A673 (cell line): ENCODE measurements at regions of chr5 and their contacts with region 1.

Region 1: DNA sequence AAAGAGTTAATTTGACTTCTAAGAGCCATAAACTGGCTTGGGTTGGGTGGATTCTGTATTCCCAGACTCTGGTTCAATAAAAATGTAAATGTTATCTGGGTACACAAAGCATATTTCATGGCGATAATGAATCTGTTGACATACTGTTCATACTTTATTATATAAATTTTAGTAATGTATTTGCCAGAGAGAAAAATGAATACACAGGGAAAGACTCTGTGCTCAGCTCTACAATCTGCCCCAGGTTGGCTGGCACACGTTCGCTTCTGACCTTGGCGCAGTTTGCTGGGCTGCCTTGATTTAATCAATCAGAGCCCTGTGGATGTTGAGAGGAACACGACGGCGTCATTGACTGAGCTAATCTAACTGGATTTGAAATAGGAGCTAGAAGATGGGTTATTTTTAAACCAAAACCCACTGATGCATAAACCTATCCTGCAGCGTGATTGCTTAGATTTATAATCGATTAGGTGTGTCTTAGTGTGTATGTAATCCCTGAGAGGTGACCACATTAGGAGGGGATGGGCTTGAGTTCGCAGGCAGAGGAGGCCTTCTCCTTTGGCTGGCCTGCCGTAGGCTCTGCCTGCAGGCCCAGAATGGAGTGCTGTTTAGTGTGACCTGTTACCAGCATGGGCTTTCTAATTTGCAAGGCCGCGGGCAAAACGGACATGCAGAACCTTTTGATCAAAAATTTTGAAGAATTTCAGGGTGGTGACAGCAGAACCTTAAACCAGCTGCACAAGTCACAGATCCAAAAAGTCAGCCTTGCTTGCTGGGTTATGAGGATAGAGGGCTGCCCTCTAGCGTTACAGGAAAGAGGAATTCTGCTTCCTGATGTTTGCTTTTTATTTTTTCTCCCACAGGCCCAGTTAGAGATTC is 3.9 kb upstream of the ADCY2 start:
- DNase-seq: peak; percentile 60
- H3K4me3 ChIP-seq: no peak overlapping the region
- H3K27ac ChIP-seq: no peak overlapping the region
- H3K4me1 ChIP-seq: no peaks in the 10 kb centered on the region
- H3K27me3 ChIP-seq: peaks cover 17% of the 10 kb centered on the region
- CTCF ChIP-seq: peak; percentile 74

Region 2: GRCh38 chr5:6765612-6766525 is 626.2 kb before region 1 on chr5:
- CTCF ChIA-PET with region 1: no interaction called
- POLR2A ChIA-PET with region 1: no interaction called
- intact Hi-C with region 1: loop called (anchors 10 kb)
- DNase-seq: peak; percentile 82
- H3K4me3 ChIP-seq: no peak overlapping the region
- H3K27ac ChIP-seq: no peak overlapping the region
- H3K4me1 ChIP-seq: peaks cover 7% of the 10 kb centered on the region
- H3K27me3 ChIP-seq: no peaks in the 10 kb centered on the region
- CTCF ChIP-seq: peak; percentile 90

Region 3: GRCh38 chr5:7124959-7125358 is 267.1 kb before region 1 on chr5:
- CTCF ChIA-PET with region 1: no interaction called
- POLR2A ChIA-PET with region 1: no interaction called
- intact Hi-C with region 1: no loop called
- DNase-seq: no peak
- H3K4me3 ChIP-seq: no peak overlapping the region
- H3K27ac ChIP-seq: no peak overlapping the region
- H3K4me1 ChIP-seq: no peaks in the 10 kb centered on the region
- H3K27me3 ChIP-seq: no peaks in the 10 kb centered on the region
- CTCF ChIP-seq: no peak

Region 4: DNA sequence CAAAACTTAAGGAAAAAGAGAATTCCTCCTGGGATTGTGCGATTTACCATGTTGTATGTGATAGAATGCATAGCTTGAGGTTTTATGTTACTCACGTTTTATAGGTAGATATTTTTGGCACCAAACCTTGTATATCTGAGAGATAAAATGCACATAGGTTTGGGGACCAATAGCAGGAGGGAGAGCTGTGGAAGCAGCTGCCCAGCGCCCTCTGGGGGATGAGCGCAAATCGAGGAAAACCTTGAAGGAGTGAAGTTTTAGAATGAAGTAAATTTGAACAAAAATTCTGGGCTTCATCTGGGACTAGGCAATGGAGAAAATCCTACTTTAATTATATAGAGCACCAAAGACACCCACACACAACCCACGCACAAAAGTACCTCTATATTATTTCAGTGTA is 200.9 kb after region 1 on chr5:
- CTCF ChIA-PET with region 1: no interaction called
- POLR2A ChIA-PET with region 1: no interaction called
- intact Hi-C with region 1: loop called (anchors 2 kb)
- DNase-seq: peak; percentile 23
- H3K4me3 ChIP-seq: no peak overlapping the region
- H3K27ac ChIP-seq: no peak overlapping the region
- H3K4me1 ChIP-seq: no peaks in the 10 kb centered on the region
- H3K27me3 ChIP-seq: no peaks in the 10 kb centered on the region
- CTCF ChIP-seq: peak; percentile 63

Region 5: GRCh38 chr5:7745882-7746610 is 354.0 kb after region 1 on chr5:
- CTCF ChIA-PET with region 1: no interaction called
- POLR2A ChIA-PET with region 1: no interaction called
- intact Hi-C with region 1: loop called (anchors 5 kb)
- DNase-seq: peak; percentile 73
- H3K4me3 ChIP-seq: no peak overlapping the region
- H3K27ac ChIP-seq: no peak overlapping the region
- H3K4me1 ChIP-seq: no peaks in the 10 kb centered on the region
- H3K27me3 ChIP-seq: no peaks in the 10 kb centered on the region
- CTCF ChIP-seq: peak; percentile 96

Region 6: GRCh38 chr5:7856855-7857254 is 464.8 kb after region 1 on chr5:
- CTCF ChIA-PET with region 1: no interaction called
- POLR2A ChIA-PET with region 1: no interaction called
- intact Hi-C with region 1: loop called (anchors 10 kb)
- DNase-seq: peak; percentile 67
- H3K4me3 ChIP-seq: no peak overlapping the region
- H3K27ac ChIP-seq: no peak overlapping the region
- H3K4me1 ChIP-seq: peaks cover 6% of the 10 kb centered on the region
- H3K27me3 ChIP-seq: no peaks in the 10 kb centered on the region
- CTCF ChIP-seq: peak; percentile 85

Region 7: DNA sequence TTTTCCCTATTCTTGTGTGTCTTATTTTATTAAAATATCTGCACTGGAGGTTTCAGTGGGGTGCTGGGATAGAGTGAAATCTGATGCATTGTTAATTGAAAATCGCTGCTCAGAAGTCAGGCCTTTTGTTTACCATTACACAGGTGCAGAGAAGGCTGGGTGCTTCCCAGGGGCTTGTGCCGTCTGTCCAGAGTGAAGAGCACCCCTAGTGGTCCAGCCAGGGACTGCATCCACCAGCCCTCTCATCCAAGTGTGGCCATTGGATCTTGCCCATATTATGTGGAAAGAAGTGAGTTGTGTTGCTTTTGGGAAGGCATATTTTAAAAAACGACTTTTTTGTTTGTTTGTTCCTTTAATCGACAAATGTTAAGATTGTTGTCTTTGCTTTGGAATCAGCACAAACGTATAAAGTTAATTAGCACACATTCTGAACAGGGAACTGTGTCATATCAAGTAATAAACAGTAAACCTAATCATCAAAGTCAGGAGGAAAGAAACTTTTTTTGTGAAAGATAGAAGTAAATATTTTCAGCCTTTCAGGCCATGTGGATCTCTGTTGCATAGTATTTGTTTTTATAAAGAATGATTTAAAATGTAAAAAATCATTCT is 792.5 kb after region 1 on chr5:
- CTCF ChIA-PET with region 1: no interaction called
- POLR2A ChIA-PET with region 1: no interaction called
- intact Hi-C with region 1: no loop called
- DNase-seq: peak; percentile 36
- H3K4me3 ChIP-seq: no peak overlapping the region
- H3K27ac ChIP-seq: no peak overlapping the region
- H3K4me1 ChIP-seq: no peaks in the 10 kb centered on the region
- H3K27me3 ChIP-seq: no peaks in the 10 kb centered on the region
- CTCF ChIP-seq: peak; percentile 72